Activated CD8-positive, alpha-beta T cell treated with anti-CD3 and anti-CD28 coated beads for 36 hours (primary cell): ENCODE measurements at regions of chr3 and their contacts with region 1.

Region 1: GRCh38 chr3:112111785-112112402 is 21.2 kb downstream of the GCSAM start:
- DNase-seq: peak; percentile 73
- ATAC-seq: peak; percentile 91
- H3K4me3 Mint-ChIP-seq: no peak overlapping the region
- H3K27ac Mint-ChIP-seq: no peak overlapping the region
- H3K4me1 Mint-ChIP-seq: peaks cover 14% of the 10 kb centered on the region
- H3K27me3 Mint-ChIP-seq: no peaks in the 10 kb centered on the region
- CTCF ChIP-seq: peak; percentile 83

Region 2: GRCh38 chr3:112128843-112129727 is 17.2 kb after region 1 on chr3:
- CTCF ChIA-PET with region 1: interaction called, 19 read pairs
- POLR2A ChIA-PET with region 1: interaction called, 3 read pairs
- intact Hi-C with region 1: no loop called
- DNase-seq: peak; percentile 75
- ATAC-seq: peak; percentile 76
- H3K4me3 Mint-ChIP-seq: peak overlapping the region; percentile 0
- H3K27ac Mint-ChIP-seq: peak overlapping the region; percentile 71
- H3K4me1 Mint-ChIP-seq: peaks cover 70% of the 10 kb centered on the region
- H3K27me3 Mint-ChIP-seq: no peaks in the 10 kb centered on the region
- CTCF ChIP-seq: no peak

Region 3: DNA sequence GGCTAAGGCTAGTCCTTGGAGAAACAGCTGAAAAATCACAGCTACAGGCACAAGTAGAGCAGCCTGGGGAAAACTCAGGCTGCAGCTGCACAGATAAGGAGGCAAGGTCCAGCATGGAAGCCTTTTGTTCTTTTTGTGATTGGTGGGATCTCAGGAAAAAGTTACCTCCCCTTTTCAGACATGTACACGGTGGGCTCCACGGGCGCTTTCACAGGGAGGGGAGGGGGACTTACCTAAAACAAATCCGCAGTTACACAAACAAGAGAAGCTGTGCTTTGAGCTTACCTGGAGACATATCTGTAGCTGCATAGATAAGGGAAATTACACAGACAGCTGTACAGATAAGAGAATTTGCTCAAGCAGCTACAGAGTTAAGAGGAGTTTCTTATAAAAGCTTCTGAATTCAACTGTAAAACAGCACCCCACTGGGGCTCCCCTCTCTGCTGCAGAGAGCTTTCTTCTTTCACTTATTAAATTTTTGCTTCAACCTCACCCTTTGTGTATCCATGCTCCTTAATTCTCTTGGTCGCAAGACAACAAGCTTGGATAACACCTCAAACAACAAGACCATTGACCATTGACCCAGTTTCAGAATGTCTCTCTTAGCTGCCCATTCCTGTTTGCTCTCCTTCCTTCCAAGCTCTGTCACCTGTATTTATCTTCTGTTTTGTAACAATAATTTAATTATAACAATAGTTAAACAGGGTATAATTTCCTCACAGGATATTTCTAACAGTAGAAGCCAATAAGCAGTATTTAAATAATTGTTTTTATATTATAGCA is 210.2 kb after region 1 on chr3:
- CTCF ChIA-PET with region 1: interaction called, 17 read pairs
- POLR2A ChIA-PET with region 1: no interaction called
- intact Hi-C with region 1: no loop called
- DNase-seq: no peak
- ATAC-seq: no peak
- H3K4me3 Mint-ChIP-seq: no peak overlapping the region
- H3K27ac Mint-ChIP-seq: no peak overlapping the region
- H3K4me1 Mint-ChIP-seq: no peaks in the 10 kb centered on the region
- H3K27me3 Mint-ChIP-seq: peaks cover 3% of the 10 kb centered on the region
- CTCF ChIP-seq: no peak

Region 4: DNA sequence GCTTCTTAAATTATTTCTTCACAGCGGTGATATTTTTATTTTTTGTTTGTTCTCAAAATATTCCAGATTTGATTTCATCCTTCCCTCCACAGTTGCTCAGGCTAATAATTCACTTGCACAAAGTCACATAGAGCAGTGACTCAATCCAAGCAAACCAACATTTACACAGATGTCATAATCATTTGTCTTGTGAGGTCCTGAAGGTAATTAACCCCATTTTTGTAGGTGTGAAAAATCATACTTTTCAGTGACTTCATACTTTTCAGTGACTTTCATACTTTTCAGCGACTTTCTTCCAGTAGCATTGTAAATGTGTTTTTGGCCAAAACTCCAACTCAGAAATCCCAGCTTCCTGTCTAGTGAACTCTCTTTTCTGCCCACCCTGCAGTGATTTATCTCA is 253.1 kb after region 1 on chr3:
- CTCF ChIA-PET with region 1: no interaction called
- POLR2A ChIA-PET with region 1: no interaction called
- intact Hi-C with region 1: no loop called
- DNase-seq: no peak
- ATAC-seq: no peak
- H3K4me3 Mint-ChIP-seq: no peak overlapping the region
- H3K27ac Mint-ChIP-seq: peak overlapping the region; percentile 36
- H3K4me1 Mint-ChIP-seq: peaks cover 30% of the 10 kb centered on the region
- H3K27me3 Mint-ChIP-seq: no peaks in the 10 kb centered on the region
- CTCF ChIP-seq: no peak

Region 5: GRCh38 chr3:112519424-112520001 is 407.6 kb after region 1 on chr3:
- CTCF ChIA-PET with region 1: interaction called, 16 read pairs
- POLR2A ChIA-PET with region 1: no interaction called
- intact Hi-C with region 1: loop called (anchors 5 kb)
- DNase-seq: peak; percentile 47
- ATAC-seq: peak; percentile 80
- H3K4me3 Mint-ChIP-seq: no peak overlapping the region
- H3K27ac Mint-ChIP-seq: peak overlapping the region; percentile 71
- H3K4me1 Mint-ChIP-seq: peaks cover 24% of the 10 kb centered on the region
- H3K27me3 Mint-ChIP-seq: no peaks in the 10 kb centered on the region
- CTCF ChIP-seq: peak; percentile 73